HepG2 (cell line): ENCODE measurements at regions of chr1 and their contacts with region 1.

Region 1: DNA sequence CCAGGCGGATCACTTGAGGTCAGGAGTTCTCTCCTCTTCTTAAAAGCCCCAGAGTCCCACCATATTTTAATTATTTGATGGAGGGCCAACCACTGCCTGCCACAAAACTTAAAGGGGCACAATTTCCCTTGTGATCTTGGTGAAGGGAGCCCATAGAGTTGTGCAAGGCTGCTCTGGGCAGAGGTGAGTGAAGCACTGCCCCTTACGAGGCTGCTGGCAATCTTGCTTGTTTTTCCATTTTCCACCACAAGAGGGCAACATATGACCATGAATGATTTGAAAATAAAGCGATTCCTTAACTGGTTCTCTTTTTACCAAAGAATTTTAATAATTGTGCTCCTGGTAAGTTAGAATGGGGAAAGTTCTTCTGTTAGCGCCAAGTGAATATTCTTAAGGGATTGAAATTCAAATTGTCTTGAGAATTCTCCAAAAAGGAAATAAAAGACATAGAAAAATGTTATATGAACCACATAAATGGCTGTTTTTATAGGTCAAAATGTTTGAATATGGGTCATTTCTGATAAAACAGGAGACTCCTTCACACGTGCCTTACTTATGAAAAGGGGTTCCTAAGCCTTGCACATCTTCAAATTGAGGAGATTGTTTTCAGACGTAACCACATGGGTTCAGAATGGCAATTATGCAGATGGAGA is 22.7 kb downstream of the PGM1 start:
- DNase-seq: peak; percentile 67
- ATAC-seq: peak; percentile 86
- H3K4me3 ChIP-seq: no peak overlapping the region
- H3K27ac ChIP-seq: no peak overlapping the region
- H3K4me1 ChIP-seq: peaks cover 62% of the 10 kb centered on the region
- H3K27me3 ChIP-seq: no peaks in the 10 kb centered on the region
- CTCF ChIP-seq: peak; percentile 77
- EP300 ChIP-seq: no peak
- POLR2A ChIP-seq: no peak
- RAD21 ChIP-seq: peak; percentile 51; the same call in 1 of the 2 replicates

Region 2: DNA sequence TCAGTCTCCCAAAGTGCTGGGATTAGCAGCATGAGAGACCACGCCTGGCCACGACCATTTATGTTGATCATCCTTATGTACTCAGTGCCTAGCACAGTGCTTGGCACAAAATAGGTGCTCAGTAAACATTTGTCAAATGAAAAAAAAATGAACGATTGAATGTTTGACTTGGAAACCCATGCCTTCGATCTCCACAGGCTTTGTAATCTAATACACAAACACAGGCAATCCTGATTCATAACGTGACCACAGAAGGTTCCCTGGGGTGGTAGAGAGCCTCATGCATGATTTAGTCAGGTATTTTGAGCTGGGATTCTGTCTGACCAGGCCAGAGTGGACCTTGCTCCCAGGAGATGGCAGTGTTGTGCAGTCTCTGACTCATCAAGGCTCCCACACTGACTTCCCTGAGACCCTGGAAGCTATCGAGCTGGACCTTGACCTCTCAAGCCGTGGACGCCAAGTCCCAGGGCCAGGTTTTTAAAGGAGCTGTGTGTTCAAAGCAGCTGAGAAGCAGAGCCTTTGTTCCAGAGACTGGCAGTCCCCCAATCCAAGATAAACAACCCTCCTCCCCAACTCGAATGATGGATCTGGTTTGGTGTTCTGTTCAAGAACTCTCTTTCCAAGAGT is 58.5 kb after region 1 on chr1:
- CTCF ChIA-PET with region 1: no interaction called
- POLR2A ChIA-PET with region 1: no interaction called
- in situ Hi-C with region 1: no loop called
- intact Hi-C with region 1: loop called (anchors 10 kb)
- DNase-seq: peak; percentile 94
- ATAC-seq: peak; percentile 95
- H3K4me3 ChIP-seq: 0 out of 6 replicates have a peak overlapping the region, but pooled peaks of 1 of the 3 experiments have one; percentile 6
- H3K27ac ChIP-seq: peak overlapping the region; percentile 54
- H3K4me1 ChIP-seq: peaks cover 38% of the 10 kb centered on the region
- H3K27me3 ChIP-seq: no peaks in the 10 kb centered on the region
- CTCF ChIP-seq: peak; percentile 96
- EP300 ChIP-seq: no peak; a peak in 1 of 4 replicates
- POLR2A ChIP-seq: no peak
- RAD21 ChIP-seq: peak; percentile 71

Region 3: GRCh38 chr1:63773815-63774616 is 158.1 kb after region 1 on chr1 and contains the start of gene ROR1:
- CTCF ChIA-PET with region 1: no interaction called
- POLR2A ChIA-PET with region 1: no interaction called
- in situ Hi-C with region 1: no loop called
- intact Hi-C with region 1: loop called (anchors 2 kb)
- DNase-seq: peak; percentile 60
- ATAC-seq: peak; percentile 97
- H3K4me3 ChIP-seq: peak within 1 kb of the TSS; percentile 61 to 80 (median 70)
- H3K27ac ChIP-seq: no peak within 1 kb of the TSS
- H3K4me1 ChIP-seq: peaks cover 40% of the 10 kb centered on the region
- H3K27me3 ChIP-seq: peaks cover 0 to 22% of the 10 kb centered on the region in 2 experiments; a peak in 1 of 5 replicates
- CTCF ChIP-seq: peak; percentile 92
- EP300 ChIP-seq: no peak
- POLR2A ChIP-seq: no peak
- RAD21 ChIP-seq: peak; percentile 45
- total RNA-seq, gene ROR1: 1.6 and 2.3 TPM in 2 replicates

Region 4: GRCh38 chr1:63917571-63918417 is 301.9 kb after region 1 on chr1:
- CTCF ChIA-PET with region 1: no interaction called
- POLR2A ChIA-PET with region 1: no interaction called
- in situ Hi-C with region 1: loop called (anchors 25 kb)
- intact Hi-C with region 1: loop called (anchors 5 kb)
- DNase-seq: peak; percentile 4
- ATAC-seq: peak; percentile 51; the same call in 2 of the 3 replicates
- H3K4me3 ChIP-seq: no peak overlapping the region
- H3K27ac ChIP-seq: no peak overlapping the region
- H3K4me1 ChIP-seq: peaks cover 13% of the 10 kb centered on the region
- H3K27me3 ChIP-seq: no peaks in the 10 kb centered on the region
- CTCF ChIP-seq: peak; percentile 48
- EP300 ChIP-seq: no peak
- POLR2A ChIP-seq: no peak
- RAD21 ChIP-seq: no peak